ENCODE measurements at regions of chr20 and their contacts with region 1.

Region 1: DNA sequence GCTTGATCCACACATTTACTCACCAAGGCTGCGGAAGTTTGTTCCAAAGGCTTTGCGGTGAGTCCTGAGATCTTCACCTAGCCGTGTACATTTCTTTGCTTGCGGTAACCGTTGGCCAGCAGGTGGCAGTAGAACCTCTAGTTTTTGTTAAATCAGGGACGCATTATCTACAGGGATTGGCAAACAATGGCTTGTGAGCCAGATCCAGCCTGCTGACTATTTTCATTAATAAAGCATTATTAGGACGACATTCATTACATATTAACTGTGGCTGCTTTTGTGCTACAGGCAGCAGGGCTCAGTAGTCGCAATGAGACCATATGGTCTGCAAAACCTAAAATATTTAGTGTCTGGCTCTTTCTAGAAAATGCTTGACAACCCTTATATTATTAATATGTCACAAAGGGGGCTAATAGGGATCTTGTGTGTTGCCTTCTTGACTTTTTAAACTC is 174.1 kb downstream of the DOK5 start:
- DNase-seq: peak; percentile 80 to 92 (median 86)
- ATAC-seq: peak; percentile 77 to 88
- H3K4me3 ChIP-seq: no peak overlapping the region
- H3K27ac ChIP-seq: no peak overlapping the region
- H3K4me1 ChIP-seq: no peaks in the 10 kb centered on the region
- H3K27me3 ChIP-seq: no peaks in the 10 kb centered on the region

Region 2: GRCh38 chr20:54207743-54208547 is 441.6 kb before region 1 on chr20 and contains the start of gene PFDN4:
- intact Hi-C with region 1: loop called in 1 of 4 experiments (anchors 5 kb)
- DNase-seq: peak; percentile 84 to 94 (median 94)
- ATAC-seq: peak; percentile 97 to 98
- H3K4me3 ChIP-seq: peak within 1 kb of the TSS; percentile 90
- H3K27ac ChIP-seq: peak within 1 kb of the TSS; percentile 99
- H3K4me1 ChIP-seq: peaks cover 4% of the 10 kb centered on the region
- H3K27me3 ChIP-seq: no peaks in the 10 kb centered on the region
- total RNA-seq, gene PFDN4: 19.6 to 28.4 (median 25.6) TPM

Region 3: DNA sequence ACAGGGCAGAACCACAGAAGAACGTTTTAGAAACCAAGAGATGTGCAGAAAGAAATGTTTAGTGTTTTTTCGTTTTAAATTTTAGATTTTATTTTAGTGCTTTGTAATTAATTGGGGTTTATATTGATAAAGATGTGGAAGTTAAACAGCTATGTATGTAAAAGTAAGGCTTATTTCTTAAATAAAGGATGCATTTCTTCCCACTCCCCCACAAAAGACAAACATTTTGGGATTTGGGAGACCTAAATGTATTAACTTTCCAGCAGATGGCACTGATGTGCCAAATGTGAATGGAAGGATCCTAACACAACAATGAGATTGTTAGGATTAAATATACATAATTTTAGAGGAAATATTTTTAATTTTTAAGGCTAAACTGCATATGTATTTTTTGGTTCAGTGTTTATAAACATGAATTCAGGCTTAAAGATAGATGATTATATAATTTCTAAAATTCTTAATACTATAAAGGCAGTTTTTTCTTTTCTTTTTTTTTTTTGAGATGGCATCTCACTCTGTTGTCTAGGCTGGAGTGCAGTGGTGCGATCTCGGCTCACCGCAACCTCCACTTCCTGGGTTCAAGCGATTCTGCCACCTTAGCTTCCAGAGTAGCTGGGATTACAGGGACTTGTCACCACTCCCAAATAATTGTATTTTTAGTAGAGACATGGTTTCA is 429.6 kb before region 1 on chr20:
- intact Hi-C with region 1: loop called (anchors 5 kb)
- DNase-seq: no peak
- ATAC-seq: no peak
- H3K4me3 ChIP-seq: no peak overlapping the region
- H3K27ac ChIP-seq: no peak overlapping the region
- H3K4me1 ChIP-seq: peaks cover 2% of the 10 kb centered on the region
- H3K27me3 ChIP-seq: no peaks in the 10 kb centered on the region

Measured in right cardiac atrium (tissue), 5 donors.